Left lung (tissue), 14 donors: ENCODE measurements at regions of chr12 and their contacts with region 1.

Region 1: GRCh38 chr12:52171950-52172512 is 19.8 kb downstream of the KRT80 start:
- DNase-seq: peak in 1 of 4 donors; percentile 76
- ATAC-seq: peak; percentile 25
- H3K4me3 ChIP-seq: no peak overlapping the region
- H3K27ac ChIP-seq: no peak overlapping the region
- H3K4me1 ChIP-seq: peaks cover 0 to 6% of the 10 kb centered on the region in 2 donors
- H3K27me3 ChIP-seq: no peaks in the 10 kb centered on the region
- CTCF ChIP-seq: peak in 1 of 2 donors; percentile 25

Region 2: GRCh38 chr12:51814311-51815088 is 357.5 kb before region 1 on chr12:
- intact Hi-C with region 1: no loop called
- DNase-seq: peak; percentile 68 to 94 (median 82)
- ATAC-seq: peak; percentile 95
- H3K4me3 ChIP-seq: peak overlapping the region; percentile 40 to 50
- H3K27ac ChIP-seq: peak overlapping the region; percentile 67 to 85
- H3K4me1 ChIP-seq: peaks cover 3 to 18% of the 10 kb centered on the region in 2 donors
- H3K27me3 ChIP-seq: peaks cover 0 to 59% of the 10 kb centered on the region in 2 donors
- CTCF ChIP-seq: peak; percentile 53 to 65

Region 3: DNA sequence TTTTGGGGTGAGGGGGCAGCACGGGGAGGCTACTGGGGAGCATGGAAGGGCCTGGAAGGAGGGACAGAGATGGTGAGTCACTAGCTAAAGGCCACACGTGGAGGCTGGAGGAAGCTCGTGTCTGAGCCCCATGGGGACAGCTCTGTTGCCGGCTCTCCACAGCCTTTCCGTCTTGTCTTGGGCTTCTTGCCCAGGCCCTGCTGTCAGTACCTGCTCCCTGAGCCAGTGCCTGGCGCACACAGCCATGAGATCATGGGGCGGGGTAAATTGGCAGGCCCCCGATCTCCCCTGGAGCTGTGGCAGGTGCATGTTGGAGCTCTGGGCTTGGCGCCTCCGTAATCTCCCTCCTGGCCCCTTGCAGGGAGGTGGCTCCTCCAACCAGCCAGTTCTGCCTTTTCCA is 35.9 kb after region 1 on chr12:
- intact Hi-C with region 1: loop called in 1 of 2 experiments (anchors 5 kb)
- DNase-seq: peak in 1 of 4 donors; percentile 75
- ATAC-seq: peak; percentile 66
- H3K4me3 ChIP-seq: no peak overlapping the region
- H3K27ac ChIP-seq: no peak overlapping the region
- H3K4me1 ChIP-seq: peaks cover 4 to 19% of the 10 kb centered on the region in 2 donors
- H3K27me3 ChIP-seq: no peaks in the 10 kb centered on the region
- CTCF ChIP-seq: no peak

Region 4: DNA sequence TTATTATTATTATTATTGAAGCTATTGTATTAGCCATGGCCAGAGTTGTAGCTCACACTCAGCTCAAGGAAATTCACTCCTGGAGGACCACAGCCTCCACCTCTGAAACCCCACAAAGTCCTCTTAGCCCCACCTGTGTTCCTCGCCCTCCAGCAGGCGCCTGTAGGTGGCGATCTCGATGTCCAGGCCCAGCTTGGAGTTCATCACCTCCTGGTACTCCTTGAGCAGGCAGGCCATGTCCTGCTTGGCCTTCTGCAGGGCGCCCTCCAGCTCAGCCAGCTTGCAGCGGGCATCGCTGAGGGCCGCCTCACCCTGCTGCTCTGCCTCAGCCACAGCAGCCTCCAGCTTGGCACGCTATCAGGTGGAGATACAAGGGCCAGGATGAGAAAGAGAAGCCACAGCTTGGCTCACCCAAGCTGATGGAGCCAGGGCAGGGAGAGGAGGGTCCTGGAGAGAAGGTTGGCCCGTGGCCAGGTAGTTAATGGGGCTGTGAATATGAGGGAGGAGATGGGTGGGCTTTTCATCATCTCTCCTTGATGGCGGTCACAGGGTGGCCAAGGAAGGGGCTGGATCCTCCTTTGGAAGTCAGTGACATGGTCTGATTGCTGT is 190.2 kb after region 1 on chr12:
- intact Hi-C with region 1: no loop called
- DNase-seq: no peak
- ATAC-seq: no peak
- H3K4me3 ChIP-seq: no peak overlapping the region
- H3K27ac ChIP-seq: no peak overlapping the region
- H3K4me1 ChIP-seq: no peaks in the 10 kb centered on the region
- H3K27me3 ChIP-seq: peaks cover 0 to 7% of the 10 kb centered on the region in 2 donors
- CTCF ChIP-seq: peak in 1 of 2 donors; percentile 8